GM10248 (cell line): ENCODE measurements at regions of chr1 and their contacts with region 1.

Region 1: GRCh38 chr1:168342572-168343280 is 62.0 kb downstream of the TBX19 start:
- DNase-seq: peak; percentile 68
- CTCF ChIP-seq: peak; percentile 79

Region 2: DNA sequence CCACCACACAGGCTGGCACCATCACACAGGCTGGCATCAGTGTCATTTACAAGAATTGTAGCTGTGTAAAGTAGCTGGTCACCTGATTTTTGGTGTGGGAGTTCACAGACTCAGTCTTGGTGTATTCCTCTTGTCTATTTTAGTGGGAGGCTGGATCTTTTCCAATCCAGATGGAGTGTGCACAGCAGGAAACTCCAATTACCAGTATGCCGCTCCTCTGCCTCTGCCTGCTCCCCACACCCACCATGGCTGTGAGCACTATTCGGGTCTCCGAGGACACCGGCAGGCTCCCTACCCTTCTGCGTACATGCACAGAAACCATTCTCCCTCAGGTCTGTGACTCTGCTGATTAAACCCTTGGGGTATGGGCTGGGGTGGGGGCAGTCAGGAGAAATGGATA is 37.9 kb before region 1 on chr1:
- CTCF ChIA-PET with region 1: interaction called, 14 read pairs
- POLR2A ChIA-PET with region 1: no interaction called
- DNase-seq: no peak
- CTCF ChIP-seq: no peak

Region 3: GRCh38 chr1:168321945-168322344 is 20.8 kb before region 1 on chr1:
- CTCF ChIA-PET with region 1: interaction called, 13 read pairs
- POLR2A ChIA-PET with region 1: no interaction called
- DNase-seq: no peak
- CTCF ChIP-seq: peak; percentile 50

Region 4: DNA sequence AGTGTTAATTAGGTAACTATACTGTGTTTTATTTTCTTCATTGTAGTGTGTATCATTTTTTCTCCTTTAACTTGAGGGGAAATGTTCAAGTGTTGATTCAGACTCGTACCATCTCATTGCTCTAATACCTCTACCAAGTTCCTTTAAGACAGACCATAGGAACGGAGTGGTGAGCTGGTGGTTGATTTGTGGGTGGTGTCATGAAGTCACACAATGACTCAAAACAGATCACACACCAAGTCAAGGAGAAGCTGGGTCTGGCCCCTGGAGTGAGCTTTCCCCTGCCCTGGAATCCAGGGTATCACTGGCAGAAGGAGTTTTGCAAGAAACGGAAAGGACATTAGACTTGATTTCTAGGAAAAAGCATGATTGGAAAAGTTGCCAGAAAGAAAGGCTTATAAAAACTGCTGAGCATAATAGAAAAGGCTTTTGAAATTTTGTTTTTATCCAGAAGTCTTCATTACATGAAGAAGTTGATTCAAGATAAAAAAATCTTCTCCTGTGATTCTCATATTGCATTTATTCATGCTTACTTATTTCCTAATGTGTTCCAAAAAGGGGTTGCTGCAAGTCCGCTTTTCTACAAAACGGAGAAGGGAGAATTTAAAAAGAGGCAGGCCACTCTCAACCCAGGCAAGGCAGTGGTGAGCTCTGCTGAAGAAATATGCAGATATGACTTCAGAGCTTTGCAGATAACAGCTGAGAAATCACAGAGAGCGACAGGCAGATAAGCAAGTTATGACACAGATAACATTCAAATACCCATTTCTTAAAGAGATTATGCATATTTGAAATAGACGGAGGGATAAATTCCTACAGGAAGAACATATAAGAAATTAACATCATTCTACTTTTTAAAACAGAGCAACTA is 17.7 kb after region 1 on chr1:
- CTCF ChIA-PET with region 1: interaction called, 13 read pairs
- POLR2A ChIA-PET with region 1: no interaction called
- DNase-seq: no peak
- CTCF ChIP-seq: no peak

Region 5: DNA sequence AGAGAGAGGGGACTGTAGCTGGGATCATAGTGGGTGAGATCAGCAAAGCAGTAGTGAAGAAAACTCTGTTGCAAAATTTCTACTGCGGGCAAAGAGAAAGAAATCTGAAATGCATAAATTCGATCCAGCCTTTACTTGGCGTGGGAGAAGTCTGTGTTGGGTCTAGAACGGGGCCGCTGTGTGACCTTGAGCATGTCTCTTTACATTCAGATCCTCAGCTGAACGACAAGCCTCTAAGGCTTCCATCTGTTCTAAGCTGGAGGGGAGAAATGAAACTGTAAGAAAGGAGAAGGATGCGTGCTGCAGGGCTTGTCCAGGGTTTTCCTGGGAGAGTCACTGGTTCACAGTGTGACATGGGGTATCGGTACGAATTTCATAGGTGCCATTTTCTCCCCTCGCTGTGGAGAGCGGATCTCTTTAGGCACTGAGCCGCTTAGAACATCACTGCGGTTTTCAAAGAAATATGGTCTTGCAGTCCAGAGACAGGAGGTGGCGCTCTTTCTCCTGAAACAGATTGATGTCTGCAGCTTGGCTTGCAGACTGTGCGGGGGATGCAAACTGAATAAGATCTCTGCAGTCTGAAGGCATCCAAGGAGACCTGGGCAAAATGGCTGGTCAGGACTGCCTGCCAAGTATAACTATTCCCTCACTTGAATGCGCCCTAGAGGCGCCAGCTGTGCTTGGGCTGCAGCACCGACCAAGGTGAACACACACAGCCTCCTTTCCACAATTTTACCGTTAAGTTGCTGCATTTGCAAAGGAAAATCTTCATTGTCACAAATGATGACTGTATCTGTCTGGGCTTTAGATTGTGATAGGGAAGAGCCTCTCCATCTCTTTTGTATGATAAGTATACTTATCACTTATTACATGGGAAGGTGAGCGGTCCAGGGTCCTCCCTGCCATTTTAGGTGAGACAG is 97.0 kb after region 1 on chr1:
- CTCF ChIA-PET with region 1: interaction called, 14 read pairs
- POLR2A ChIA-PET with region 1: no interaction called
- DNase-seq: peak; percentile 68
- CTCF ChIP-seq: peak; percentile 79

Region 6: DNA sequence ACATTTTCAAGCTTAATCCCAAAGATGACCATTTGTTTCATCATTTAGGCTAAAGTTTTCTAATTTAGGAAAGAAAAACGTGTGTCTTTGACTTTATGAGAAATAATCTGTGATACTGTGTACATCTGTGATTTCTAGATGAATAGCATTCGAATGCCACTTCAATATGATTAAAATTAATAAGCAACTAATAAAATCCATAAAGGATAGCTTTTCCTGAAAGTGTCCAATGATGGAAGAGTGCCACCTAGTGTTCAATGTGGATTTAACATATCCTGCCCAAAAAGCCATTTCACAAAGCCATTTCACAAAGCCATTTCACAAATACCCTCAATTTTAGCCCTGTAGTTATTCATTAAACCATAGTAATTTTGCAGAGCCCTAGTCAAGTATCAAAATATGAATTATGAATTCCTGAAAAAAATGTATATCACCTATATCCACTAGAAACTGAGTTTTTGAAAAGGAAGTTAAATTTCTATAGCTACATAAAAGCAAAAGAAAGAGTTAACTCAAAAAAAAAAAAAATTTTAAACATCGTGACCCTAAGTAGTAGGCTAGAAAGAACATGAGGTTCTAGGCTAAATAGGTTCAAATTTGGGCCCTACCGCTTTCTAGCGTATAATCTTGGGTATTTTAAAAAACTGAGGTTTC is 1005.8 kb after region 1 on chr1:
- CTCF ChIA-PET with region 1: interaction called, 55 read pairs
- POLR2A ChIA-PET with region 1: no interaction called
- DNase-seq: no peak
- CTCF ChIP-seq: peak; percentile 65

Region 7: DNA sequence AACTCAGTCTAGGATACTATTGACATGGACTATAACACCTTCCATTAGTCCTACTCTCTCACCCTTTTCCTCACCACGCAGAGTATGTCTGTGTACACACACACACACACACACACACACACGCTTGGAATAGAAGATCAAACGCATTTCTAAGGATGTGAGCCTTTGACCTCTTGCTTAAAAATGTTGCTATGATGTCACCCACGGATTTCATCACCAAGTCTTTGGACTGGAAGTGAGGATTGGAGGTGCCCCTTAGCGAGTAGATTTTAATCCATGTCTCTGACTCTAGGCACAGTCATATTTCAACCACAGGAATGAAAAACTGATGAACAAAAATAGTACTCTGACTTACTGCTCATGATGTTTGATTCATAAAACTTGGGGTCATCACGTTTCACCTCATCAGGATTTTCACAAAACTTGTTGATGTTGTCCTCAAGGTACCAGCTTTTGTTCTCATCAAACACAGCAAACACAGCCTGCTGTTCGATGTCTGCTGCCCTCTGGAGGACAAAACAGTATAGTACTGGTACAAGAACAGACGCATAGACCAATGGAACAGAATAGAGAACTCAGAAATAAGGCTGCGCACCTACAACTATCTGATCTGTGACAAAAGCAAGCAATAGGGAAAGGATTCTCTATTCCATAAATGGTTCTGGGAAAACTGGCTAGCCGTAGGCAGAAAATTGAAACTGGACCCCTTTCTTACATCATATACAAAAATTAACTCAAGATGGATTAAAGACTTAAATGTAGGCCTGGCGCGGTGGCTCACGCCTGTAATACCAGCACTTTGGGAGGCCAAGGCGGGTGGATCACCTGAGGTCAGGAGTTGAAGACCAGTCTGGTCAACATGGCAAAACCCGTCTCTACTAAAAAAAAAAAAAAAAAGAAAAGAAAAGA is 1203.6 kb after region 1 on chr1:
- CTCF ChIA-PET with region 1: interaction called, 21 read pairs
- POLR2A ChIA-PET with region 1: no interaction called
- DNase-seq: peak; percentile 25
- CTCF ChIP-seq: peak; percentile 74